ENCODE measurements at regions of chr17 and their contacts with region 1.

Region 1: GRCh38 chr17:63406689-63407330 is 39.3 kb downstream of the CYB561 start:
- DNase-seq: no peak
- H3K4me3 ChIP-seq: no peak overlapping the region
- H3K27ac ChIP-seq: no peak overlapping the region
- H3K4me1 ChIP-seq: no peaks in the 10 kb centered on the region
- H3K27me3 ChIP-seq: no peaks in the 10 kb centered on the region
- CTCF ChIP-seq: peak; percentile 59 to 81 (median 72)
- POLR2A ChIP-seq: no peak

Region 2: GRCh38 chr17:62703775-62704378 is 702.9 kb before region 1 on chr17:
- intact Hi-C with region 1: loop called (anchors 5 kb)
- DNase-seq: no peak
- H3K4me3 ChIP-seq: peak overlapping the region; percentile 56 to 74
- H3K27ac ChIP-seq: peak overlapping the region; percentile 81
- H3K4me1 ChIP-seq: peaks cover 26% of the 10 kb centered on the region
- H3K27me3 ChIP-seq: no peaks in the 10 kb centered on the region
- CTCF ChIP-seq: peak in 2 of 3 experiments; percentile 57 to 83
- POLR2A ChIP-seq: no peak

Region 3: DNA sequence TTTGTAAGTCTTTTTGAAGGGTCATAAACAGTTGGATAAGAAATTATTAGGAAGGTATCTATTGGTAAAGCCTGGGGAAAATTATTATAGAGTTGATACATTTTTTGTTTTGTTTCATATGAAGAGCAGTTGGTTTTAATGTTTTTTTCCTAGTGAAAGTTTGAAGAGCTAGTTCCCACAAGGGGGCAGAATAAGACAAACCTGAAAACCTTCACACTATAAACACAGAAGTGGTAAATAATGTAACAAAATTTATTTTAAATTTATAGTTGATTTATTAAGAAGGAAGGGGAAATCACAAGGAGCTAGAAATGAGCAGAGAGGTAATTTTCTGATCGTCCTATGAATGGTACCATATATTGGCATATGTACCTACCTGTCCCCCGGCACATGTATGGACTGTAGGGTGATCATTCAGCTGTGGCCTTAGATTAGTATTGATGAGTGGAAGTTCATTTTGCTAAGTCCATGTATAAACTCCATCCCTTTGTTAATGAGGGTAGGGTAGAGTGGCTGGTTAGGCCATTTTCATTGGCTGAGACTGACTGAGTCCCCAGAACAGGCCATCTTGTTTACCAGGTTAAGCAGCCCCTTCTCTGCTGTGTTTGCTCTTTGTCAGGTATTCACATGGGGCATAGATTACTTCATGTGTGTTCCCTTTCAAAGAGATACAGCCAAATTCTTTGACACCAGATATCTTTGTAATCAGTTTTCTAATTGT is 324.4 kb before region 1 on chr17:
- intact Hi-C with region 1: loop called (anchors 10 kb)
- DNase-seq: no peak
- H3K4me3 ChIP-seq: no peak overlapping the region
- H3K27ac ChIP-seq: no peak overlapping the region
- H3K4me1 ChIP-seq: no peaks in the 10 kb centered on the region
- H3K27me3 ChIP-seq: no peaks in the 10 kb centered on the region
- CTCF ChIP-seq: no peak
- POLR2A ChIP-seq: no peak

Region 4: DNA sequence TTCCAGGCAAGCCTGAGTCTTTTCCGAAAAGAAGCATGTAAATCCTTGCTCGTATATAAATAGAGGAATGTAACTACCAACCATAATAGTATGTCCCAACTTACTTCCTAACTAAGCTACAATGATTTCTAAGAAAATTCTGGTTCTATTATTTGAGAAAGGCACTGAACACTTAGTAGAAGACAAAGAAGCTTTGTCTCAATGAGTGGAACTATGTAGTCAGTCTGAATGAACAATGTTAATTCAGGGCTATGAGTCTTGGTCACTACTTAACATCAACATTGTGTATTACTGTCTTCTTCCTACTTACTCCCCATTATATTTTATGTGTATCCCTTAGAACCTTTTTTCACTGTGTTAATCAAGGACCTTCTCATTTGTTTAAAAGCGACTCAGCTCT is 166.7 kb before region 1 on chr17:
- intact Hi-C with region 1: no loop called
- DNase-seq: no peak
- H3K4me3 ChIP-seq: no peak overlapping the region
- H3K27ac ChIP-seq: no peak overlapping the region
- H3K4me1 ChIP-seq: no peaks in the 10 kb centered on the region
- H3K27me3 ChIP-seq: no peaks in the 10 kb centered on the region
- CTCF ChIP-seq: no peak
- POLR2A ChIP-seq: no peak

Region 5: GRCh38 chr17:63250830-63251229 is 156.0 kb before region 1 on chr17:
- intact Hi-C with region 1: no loop called
- DNase-seq: no peak
- H3K4me3 ChIP-seq: no peak overlapping the region
- H3K27ac ChIP-seq: no peak overlapping the region
- H3K4me1 ChIP-seq: no peaks in the 10 kb centered on the region
- H3K27me3 ChIP-seq: no peaks in the 10 kb centered on the region
- CTCF ChIP-seq: no peak
- POLR2A ChIP-seq: no peak

Measured in vagina (tissue), 2 donors.